ENCODE measurements at regions of chr5 and their contacts with region 1.

Region 1: DNA sequence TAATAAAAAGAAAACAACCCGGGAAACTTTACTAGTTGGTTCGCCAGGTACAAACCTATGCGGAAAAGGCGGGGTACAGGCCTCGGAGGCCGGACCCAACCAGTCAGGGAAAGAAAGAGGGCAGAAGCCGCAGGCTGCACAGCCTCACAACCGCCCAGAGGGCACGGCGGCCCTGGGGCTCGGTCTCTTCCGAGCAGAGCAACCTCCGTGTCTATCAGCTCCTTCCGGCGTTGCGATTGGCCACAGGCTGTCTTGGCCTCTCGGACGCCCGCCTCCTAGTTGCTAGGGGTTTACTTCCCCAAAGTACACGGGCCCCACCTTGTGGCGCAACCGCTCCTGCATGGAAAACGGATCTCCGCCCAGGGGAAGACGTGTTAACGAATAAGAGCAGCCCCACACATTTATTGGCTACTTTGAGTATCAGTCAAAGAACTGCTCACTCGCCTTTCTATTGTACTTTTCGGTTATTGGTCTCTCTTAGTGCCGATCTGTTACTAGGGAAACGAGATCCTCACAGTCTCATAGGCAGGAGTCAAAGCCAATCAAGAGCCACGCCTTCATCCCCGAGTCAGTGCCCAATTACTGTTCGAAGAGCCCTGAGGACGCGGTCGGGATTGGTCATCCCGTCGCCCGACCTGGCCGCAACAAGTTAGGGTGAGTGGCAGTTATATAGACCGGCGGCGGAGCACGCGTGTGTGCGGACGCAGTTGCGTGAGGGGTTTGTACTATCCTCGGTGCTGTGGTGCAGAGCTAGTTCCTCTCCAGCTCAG is at the start of gene G3BP1:
- DNase-seq: peak; percentile 97
- CTCF ChIP-seq: peak; percentile 68

Region 2: DNA sequence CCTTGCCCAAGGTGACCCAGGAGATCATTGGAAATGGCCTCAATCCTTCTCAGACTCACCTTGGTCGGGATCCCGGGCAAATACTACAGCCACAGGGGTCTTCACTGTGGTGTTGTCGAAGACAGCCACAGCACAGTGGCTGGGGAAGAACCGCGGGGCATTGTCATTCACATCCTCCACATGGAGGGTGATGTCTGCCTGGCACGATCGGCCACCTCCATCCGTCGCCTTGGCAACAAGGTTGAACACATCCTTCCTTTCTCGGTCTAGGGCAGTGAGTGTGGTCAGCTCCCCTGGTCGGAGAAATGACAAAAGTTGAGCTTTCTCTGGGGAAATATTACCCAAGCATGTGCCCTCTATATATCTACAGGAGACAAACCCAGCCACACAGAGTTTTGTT is 237.1 kb before region 1 on chr5:
- CTCF ChIA-PET with region 1: no interaction called
- POLR2A ChIA-PET with region 1: no interaction called
- DNase-seq: no peak
- CTCF ChIP-seq: no peak

Region 3: GRCh38 chr5:151758430-151759241 is 12.8 kb before region 1 on chr5 and contains the start of gene ATOX1:
- CTCF ChIA-PET with region 1: interaction called, 155 read pairs
- POLR2A ChIA-PET with region 1: interaction called, 18 read pairs
- DNase-seq: peak; percentile 99
- CTCF ChIP-seq: no peak

Region 4: DNA sequence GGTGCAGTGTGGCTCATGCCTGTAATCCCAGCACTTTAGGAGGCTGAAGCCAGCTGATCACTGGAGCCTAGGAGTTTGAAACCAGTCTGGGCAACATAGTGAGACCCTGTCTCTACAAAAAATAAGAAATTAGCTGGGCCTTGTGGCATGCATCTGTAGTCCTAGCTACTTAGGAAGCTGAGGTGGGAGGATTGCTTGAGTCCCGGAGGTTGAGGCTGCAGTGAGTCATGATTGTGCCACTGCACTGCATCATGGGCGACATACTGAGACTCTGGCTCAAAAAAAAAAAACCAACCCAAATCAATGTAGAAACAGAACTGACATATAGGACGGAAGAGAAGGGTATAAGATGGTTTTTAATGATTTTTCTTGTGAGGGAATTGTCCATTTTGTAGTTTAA is 28.0 kb after region 1 on chr5:
- CTCF ChIA-PET with region 1: no interaction called
- POLR2A ChIA-PET with region 1: no interaction called
- DNase-seq: no peak
- CTCF ChIP-seq: no peak